ENCODE measurements at regions of chr11 and their contacts with region 1.

Region 1: GRCh38 chr11:60831143-60831500 is 10.8 kb upstream of the CCDC86 start:
- DNase-seq: peak; percentile 83
- H3K4me3 ChIP-seq: no peak overlapping the region
- H3K27ac ChIP-seq: no peak overlapping the region
- H3K4me1 ChIP-seq: peaks cover 21% of the 10 kb centered on the region
- H3K27me3 ChIP-seq: no peaks in the 10 kb centered on the region
- CTCF ChIP-seq: peak; percentile 89 to 90
- POLR2A ChIP-seq: no peak

Region 2: DNA sequence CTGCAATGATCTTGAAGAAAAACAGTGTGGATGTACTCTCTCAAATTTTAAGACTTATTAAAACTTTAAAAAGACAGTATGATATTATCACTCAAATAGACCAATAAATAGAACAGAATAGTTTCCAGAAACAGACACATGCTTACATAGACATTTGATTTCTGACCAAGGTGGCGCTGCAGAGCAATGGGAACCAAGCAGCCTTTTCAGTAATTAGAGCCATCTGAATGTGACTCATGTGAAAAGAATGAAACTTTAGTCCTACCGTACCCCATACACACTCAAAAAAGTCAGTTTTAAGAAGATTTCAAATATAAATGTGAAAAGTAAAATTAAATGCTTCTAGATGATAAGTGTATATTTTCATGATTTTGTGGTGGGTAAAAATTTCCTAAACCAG is 205.9 kb before region 1 on chr11:
- CTCF ChIA-PET with region 1: no interaction called
- POLR2A ChIA-PET with region 1: no interaction called
- dilution Hi-C with region 1: no loop called
- intact Hi-C with region 1: no loop called
- DNase-seq: peak; percentile 52
- H3K4me3 ChIP-seq: no peak overlapping the region
- H3K27ac ChIP-seq: no peak overlapping the region
- H3K4me1 ChIP-seq: no peaks in the 10 kb centered on the region
- H3K27me3 ChIP-seq: no peaks in the 10 kb centered on the region
- CTCF ChIP-seq: peak; percentile 8 to 28
- POLR2A ChIP-seq: no peak

Region 3: DNA sequence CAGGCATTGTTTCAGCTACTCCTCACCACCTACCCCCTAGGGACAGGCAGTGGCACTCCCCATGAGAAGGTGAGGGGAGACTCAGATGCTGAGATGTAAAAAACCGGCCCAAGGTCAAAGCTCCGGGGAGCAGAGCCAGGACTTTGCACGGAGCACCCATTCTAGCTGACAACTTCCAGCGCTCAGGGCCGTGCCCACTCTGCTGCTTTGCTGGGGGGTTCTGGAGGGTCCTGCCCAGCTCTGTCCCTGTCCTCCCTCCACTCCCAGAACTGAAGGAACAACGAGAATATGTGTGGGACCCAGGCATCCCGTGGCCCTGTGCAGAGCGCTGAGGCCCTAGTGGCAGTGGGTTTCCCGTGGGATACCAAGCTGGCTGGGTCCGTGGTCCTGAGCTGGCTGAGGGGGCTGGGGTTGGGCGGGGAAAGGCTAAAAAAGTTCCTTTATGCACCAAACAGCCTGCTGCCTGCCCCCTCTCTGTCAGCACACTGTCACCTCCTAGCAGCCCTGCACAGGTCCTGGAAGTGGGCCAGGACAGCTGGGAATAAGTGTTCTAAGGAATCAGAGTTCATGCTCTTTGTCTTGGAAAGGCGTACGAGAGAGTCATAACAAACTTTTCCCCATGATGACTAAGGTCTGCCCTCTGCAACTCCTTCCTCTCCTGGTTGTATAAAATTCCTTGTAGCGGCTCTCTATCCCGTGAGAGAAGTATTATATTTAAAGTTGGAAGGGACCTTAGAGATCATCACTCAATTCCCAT is 44.1 kb before region 1 on chr11:
- CTCF ChIA-PET with region 1: interaction called, 7 read pairs
- POLR2A ChIA-PET with region 1: no interaction called
- dilution Hi-C with region 1: no loop called
- intact Hi-C with region 1: loop called (anchors 5 kb)
- DNase-seq: peak; percentile 96
- H3K4me3 ChIP-seq: no peak overlapping the region
- H3K27ac ChIP-seq: peak overlapping the region; percentile 78
- H3K4me1 ChIP-seq: peaks cover 28% of the 10 kb centered on the region
- H3K27me3 ChIP-seq: no peaks in the 10 kb centered on the region
- CTCF ChIP-seq: no peak
- POLR2A ChIP-seq: no peak

Region 4: DNA sequence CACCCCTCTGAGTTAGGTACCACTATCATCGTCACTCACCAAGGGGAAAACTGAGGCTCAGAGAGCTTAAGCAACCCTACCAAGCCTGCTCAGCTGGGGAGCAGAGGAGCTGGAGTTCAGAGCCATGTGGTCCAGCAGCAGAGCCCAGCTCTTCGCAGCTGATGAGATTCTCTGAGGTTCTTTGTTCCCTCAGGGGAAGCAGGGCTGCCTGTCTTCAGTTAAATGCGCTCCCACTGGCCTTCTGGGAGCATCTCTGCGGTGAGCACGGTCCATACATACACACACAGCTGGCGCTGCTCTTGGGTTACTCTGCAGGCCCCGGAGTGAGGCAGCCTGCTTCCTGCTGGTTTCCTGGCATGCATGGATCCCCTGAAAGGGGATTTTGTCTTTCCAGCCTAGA is 29.8 kb after region 1 on chr11:
- CTCF ChIA-PET with region 1: interaction called, 22 read pairs
- POLR2A ChIA-PET with region 1: no interaction called
- dilution Hi-C with region 1: no loop called
- intact Hi-C with region 1: no loop called
- DNase-seq: no peak
- H3K4me3 ChIP-seq: no peak overlapping the region
- H3K27ac ChIP-seq: no peak overlapping the region
- H3K4me1 ChIP-seq: no peaks in the 10 kb centered on the region
- H3K27me3 ChIP-seq: no peaks in the 10 kb centered on the region
- CTCF ChIP-seq: no peak
- POLR2A ChIP-seq: no peak

Region 5: GRCh38 chr11:60880643-60881282 is 49.6 kb after region 1 on chr11:
- CTCF ChIA-PET with region 1: interaction called, 607 read pairs
- POLR2A ChIA-PET with region 1: no interaction called
- dilution Hi-C with region 1: no loop called
- intact Hi-C with region 1: no loop called
- DNase-seq: no peak
- H3K4me3 ChIP-seq: no peak overlapping the region
- H3K27ac ChIP-seq: no peak overlapping the region
- H3K4me1 ChIP-seq: no peaks in the 10 kb centered on the region
- H3K27me3 ChIP-seq: no peaks in the 10 kb centered on the region
- CTCF ChIP-seq: no peak
- POLR2A ChIP-seq: no peak

Region 6: DNA sequence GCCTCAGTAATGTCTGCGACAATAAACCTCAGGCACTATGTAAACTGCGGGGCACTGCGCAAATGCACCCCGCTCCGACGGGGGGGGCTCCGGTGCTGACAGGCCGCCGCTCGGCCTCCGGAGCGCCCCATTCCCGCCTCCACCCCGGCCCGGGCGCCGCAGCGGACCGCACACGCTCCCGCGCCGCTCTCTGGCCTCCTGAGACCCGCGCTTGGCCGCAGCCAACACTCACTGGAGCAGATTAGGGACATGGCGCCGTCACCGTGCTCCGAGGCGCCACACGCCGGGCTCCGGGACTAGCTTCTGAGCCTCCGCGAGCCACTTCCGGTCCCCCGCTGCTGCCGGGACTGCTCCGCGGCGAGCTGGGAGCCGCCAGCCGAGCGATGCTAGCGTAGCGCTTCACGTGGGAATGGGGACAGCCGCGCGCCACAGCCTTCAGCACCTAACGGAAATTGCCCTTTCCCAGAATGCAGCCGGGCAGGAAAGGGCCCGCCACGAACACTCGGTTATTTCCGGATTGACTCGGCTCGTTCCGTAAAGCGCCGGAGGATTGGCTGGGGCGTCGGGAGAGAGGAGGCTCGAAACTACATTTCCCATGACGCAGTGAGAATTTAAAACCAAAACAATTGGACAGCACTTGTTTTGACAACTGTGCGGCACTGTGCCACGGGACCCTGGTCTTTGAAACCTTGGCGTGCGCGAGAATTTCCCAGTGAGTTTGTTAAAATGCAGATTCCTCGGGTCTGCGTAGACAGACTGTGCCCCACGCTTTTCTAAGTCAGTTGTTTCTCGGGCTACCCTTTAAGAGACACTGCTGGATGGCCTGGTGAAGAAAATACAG is 75.2 kb after region 1 on chr11 and contains the start of gene PRPF19:
- CTCF ChIA-PET with region 1: interaction called, 300 read pairs
- POLR2A ChIA-PET with region 1: no interaction called
- dilution Hi-C with region 1: no loop called
- intact Hi-C with region 1: no loop called
- DNase-seq: peak; percentile 99
- H3K4me3 ChIP-seq: peak within 1 kb of the TSS; percentile 77 to 89 (median 84)
- H3K27ac ChIP-seq: peak within 1 kb of the TSS; percentile 86
- H3K4me1 ChIP-seq: peaks cover 25% of the 10 kb centered on the region
- H3K27me3 ChIP-seq: peaks cover 0 to 6% of the 10 kb centered on the region in 2 experiments
- CTCF ChIP-seq: no peak
- POLR2A ChIP-seq: peak; percentile 94
- total RNA-seq, gene PRPF19: 114 and 126 TPM in 2 replicates

Region 7: DNA sequence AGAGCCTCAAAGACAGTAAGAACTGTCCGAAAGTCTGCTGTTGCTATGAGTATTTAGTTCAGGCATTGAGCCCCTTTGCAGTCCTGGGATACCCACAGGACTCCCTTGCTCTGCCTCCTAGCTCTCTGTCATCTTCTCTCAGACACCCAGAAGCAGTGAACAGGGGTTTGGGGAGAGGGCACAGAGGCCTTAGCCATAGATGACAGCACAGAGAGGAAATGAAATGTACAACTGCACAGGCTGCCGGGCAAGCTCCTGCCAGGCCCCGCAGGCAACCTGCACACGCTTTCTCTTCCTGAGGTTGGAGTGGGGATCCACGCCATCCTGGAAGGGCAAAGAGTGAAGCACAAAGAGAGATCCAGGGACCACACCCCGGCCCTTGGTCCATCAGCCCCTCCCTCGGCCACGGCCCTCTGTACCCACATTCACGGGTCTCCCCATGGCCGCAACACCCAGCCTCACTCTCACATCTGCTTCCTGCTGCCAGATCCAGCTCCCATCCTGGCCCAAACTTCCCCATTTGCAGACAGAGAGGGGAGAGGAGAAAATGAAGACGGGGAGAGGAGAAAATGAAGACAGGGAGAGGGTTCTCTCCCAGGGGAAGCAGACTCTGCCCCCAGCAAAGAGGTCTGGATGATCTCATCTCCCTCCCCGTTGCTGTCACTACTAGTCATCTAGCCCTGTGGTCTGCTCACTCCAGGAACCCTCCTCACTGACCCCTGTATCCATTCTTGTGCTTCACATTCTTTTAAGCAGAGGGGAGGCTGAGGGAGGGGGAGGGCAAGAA is 181.0 kb after region 1 on chr11:
- CTCF ChIA-PET with region 1: no interaction called
- POLR2A ChIA-PET with region 1: no interaction called
- dilution Hi-C with region 1: no loop called
- intact Hi-C with region 1: no loop called
- DNase-seq: no peak
- H3K4me3 ChIP-seq: no peak overlapping the region
- H3K27ac ChIP-seq: no peak overlapping the region
- H3K4me1 ChIP-seq: no peaks in the 10 kb centered on the region
- H3K27me3 ChIP-seq: peaks cover 24 to 27% of the 10 kb centered on the region in 2 experiments
- CTCF ChIP-seq: no peak
- POLR2A ChIP-seq: no peak

Region 8: GRCh38 chr11:61152816-61153592 is 321.9 kb after region 1 on chr11:
- CTCF ChIA-PET with region 1: no interaction called
- POLR2A ChIA-PET with region 1: no interaction called
- dilution Hi-C with region 1: no loop called
- intact Hi-C with region 1: loop called (anchors 10 kb)
- DNase-seq: peak; percentile 32
- H3K4me3 ChIP-seq: no peak overlapping the region
- H3K27ac ChIP-seq: peak overlapping the region; percentile 40
- H3K4me1 ChIP-seq: peaks cover 21% of the 10 kb centered on the region
- H3K27me3 ChIP-seq: no peaks in the 10 kb centered on the region
- CTCF ChIP-seq: no peak
- POLR2A ChIP-seq: no peak

Measured in endothelial cell of umbilical vein (primary cell).